Endothelial cell of umbilical vein (primary cell): ENCODE measurements at regions of chr20 and their contacts with region 1.

Region 1: DNA sequence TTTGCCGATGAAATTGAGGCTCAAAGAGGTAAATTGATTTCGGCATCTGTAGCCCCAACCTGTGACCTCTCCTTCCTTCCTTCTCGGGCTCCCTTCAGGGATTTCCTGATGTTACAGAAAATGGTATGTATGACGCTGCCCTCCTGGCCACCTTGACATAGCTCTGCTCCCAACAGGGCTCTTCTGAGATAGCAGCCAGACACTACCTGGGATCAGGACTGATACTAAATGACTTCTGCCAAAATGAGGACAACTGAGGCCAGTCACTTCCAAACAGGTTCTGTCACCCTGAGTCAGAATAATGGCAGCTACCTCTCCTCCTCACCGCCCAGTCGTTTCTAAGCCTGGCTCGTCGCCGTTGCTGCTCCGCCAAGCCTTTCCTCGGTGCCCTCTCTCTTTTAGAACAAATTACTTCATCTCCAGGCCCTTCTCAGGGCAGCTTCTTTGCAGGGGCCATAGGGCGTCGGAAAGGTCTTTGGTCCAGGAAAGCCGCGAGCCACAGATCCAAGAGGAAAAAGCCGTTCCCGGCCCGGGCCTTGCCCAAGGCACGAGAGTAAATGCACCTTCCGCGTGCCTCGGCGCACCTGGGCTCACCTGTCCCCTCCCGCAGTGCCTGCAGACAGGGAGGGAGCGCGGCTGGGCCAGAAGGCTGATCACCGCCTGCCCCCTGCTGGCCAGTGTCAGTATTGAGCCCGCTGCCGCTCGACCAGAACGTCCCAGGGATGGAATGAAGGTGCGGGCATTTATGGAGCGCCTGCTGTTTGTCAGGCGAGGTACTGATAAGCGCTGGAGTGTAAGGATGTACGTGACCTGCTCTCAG is 904 bp upstream of the LPIN3 start:
- DNase-seq: peak; percentile 62
- H3K4me3 ChIP-seq: peak overlapping the region; percentile 18 to 65 (median 20)
- H3K27ac ChIP-seq: no peak overlapping the region
- H3K4me1 ChIP-seq: peaks cover 17% of the 10 kb centered on the region
- H3K27me3 ChIP-seq: no peaks in the 10 kb centered on the region
- CTCF ChIP-seq: peak; percentile 93 to 97
- POLR2A ChIP-seq: no peak

Region 2: GRCh38 chr20:40970201-40970600 is 369.5 kb before region 1 on chr20:
- CTCF ChIA-PET with region 1: interaction called, 3 read pairs
- POLR2A ChIA-PET with region 1: no interaction called
- dilution Hi-C with region 1: no loop called
- intact Hi-C with region 1: loop called (anchors 1 kb)
- DNase-seq: no peak
- H3K4me3 ChIP-seq: no peak overlapping the region
- H3K27ac ChIP-seq: no peak overlapping the region
- H3K4me1 ChIP-seq: no peaks in the 10 kb centered on the region
- H3K27me3 ChIP-seq: no peaks in the 10 kb centered on the region
- CTCF ChIP-seq: peak in 1 of 2 donors; percentile 16
- POLR2A ChIP-seq: no peak

Region 3: DNA sequence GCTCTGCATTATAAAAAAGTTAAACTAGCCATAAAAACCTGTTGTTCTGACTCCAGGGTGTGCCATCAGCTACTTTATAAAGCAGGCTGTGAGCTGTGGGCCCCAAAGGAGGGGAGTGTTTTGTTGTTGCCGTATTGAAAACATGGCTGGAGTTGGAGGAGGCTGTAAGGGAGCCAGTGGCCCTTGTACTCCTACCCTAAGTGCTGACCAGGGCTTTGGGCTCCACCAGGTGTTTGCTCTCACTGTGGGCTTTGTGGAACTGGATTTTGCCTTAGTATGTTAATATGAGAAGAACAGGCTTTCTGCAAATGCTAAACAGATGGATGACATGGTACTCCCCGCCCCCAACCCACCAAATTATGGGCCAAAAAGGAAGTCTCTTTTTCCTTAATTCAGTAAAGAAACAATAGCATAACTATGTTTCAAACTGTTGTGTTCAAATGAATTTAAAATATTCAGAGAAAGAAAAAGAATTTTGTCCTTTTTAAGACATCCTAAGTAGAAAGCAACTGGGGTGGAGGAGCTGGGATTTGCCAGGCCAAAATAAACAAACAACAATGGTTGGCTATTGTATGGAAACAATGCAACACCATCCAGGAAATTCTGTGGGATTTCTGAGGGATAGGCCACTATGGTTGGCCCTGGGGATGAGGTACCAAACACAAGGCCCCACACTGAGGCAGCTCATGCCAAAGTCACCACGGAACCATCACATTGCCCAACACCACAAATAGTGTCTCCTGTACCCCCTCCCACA is 139.1 kb before region 1 on chr20:
- CTCF ChIA-PET with region 1: interaction called, 20 read pairs
- POLR2A ChIA-PET with region 1: no interaction called
- dilution Hi-C with region 1: no loop called
- intact Hi-C with region 1: no loop called
- DNase-seq: peak; percentile 87
- H3K4me3 ChIP-seq: no peak overlapping the region
- H3K27ac ChIP-seq: peak overlapping the region; percentile 63
- H3K4me1 ChIP-seq: peaks cover 18% of the 10 kb centered on the region
- H3K27me3 ChIP-seq: no peaks in the 10 kb centered on the region
- CTCF ChIP-seq: no peak
- POLR2A ChIP-seq: no peak

Region 4: GRCh38 chr20:41232973-41233926 is 106.5 kb before region 1 on chr20:
- CTCF ChIA-PET with region 1: interaction called, 88 read pairs
- POLR2A ChIA-PET with region 1: no interaction called
- dilution Hi-C with region 1: no loop called
- intact Hi-C with region 1: loop called (anchors 1 kb)
- DNase-seq: peak; percentile 59
- H3K4me3 ChIP-seq: no peak overlapping the region
- H3K27ac ChIP-seq: peak overlapping the region; percentile 40
- H3K4me1 ChIP-seq: peaks cover 17% of the 10 kb centered on the region
- H3K27me3 ChIP-seq: no peaks in the 10 kb centered on the region
- CTCF ChIP-seq: no peak
- POLR2A ChIP-seq: no peak

Region 5: GRCh38 chr20:41317536-41318270 is 22.0 kb before region 1 on chr20 and contains the start of gene ZHX3:
- CTCF ChIA-PET with region 1: interaction called, 15 read pairs
- POLR2A ChIA-PET with region 1: interaction called, 4 read pairs
- dilution Hi-C with region 1: no loop called
- intact Hi-C with region 1: loop called (anchors 1 kb)
- DNase-seq: peak; percentile 97
- H3K4me3 ChIP-seq: peak within 1 kb of the TSS; percentile 76 to 87 (median 79)
- H3K27ac ChIP-seq: peak within 1 kb of the TSS; percentile 70
- H3K4me1 ChIP-seq: peaks cover 18% of the 10 kb centered on the region
- H3K27me3 ChIP-seq: no peaks in the 10 kb centered on the region
- CTCF ChIP-seq: no peak
- POLR2A ChIP-seq: peak; percentile 82
- total RNA-seq, gene ZHX3: 15.1 and 17.8 TPM in 2 replicates

Region 6: DNA sequence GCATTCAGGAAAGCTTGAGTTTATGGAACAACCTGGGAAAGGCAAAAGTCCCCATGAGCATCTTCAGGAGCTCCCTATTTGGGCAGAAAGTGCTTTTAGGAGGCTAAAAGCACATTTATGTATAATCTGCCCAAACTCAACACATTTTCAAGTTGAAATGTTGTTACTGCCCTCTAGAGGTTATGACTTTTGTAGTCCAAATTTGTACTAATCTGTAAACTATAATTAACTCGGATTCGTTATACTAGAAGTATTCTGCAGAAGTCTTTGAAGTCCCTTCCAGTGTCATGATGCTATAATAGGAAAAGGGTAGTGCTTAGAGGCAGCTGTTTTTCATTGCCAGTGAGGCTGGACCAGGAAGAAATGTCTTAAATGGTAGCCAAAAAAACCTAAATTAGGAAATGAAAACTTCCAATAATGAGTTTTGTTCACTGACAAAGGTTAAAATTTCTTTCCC is 71.7 kb after region 1 on chr20:
- CTCF ChIA-PET with region 1: interaction called, 15 read pairs
- POLR2A ChIA-PET with region 1: no interaction called
- dilution Hi-C with region 1: no loop called
- intact Hi-C with region 1: loop called (anchors 1 kb)
- DNase-seq: peak; percentile 48
- H3K4me3 ChIP-seq: no peak overlapping the region
- H3K27ac ChIP-seq: no peak overlapping the region
- H3K4me1 ChIP-seq: no peaks in the 10 kb centered on the region
- H3K27me3 ChIP-seq: no peaks in the 10 kb centered on the region
- CTCF ChIP-seq: peak; percentile 12 to 19
- POLR2A ChIP-seq: no peak